Activated CD8-positive, alpha-beta T cell treated with anti-CD3 and anti-CD28 coated beads, Interleukin-2, amount 10 ng/mL, durations not matched to agents 7 days and 5 days (primary cell): ENCODE measurements at regions of chr15 and their contacts with region 1.

Region 1: DNA sequence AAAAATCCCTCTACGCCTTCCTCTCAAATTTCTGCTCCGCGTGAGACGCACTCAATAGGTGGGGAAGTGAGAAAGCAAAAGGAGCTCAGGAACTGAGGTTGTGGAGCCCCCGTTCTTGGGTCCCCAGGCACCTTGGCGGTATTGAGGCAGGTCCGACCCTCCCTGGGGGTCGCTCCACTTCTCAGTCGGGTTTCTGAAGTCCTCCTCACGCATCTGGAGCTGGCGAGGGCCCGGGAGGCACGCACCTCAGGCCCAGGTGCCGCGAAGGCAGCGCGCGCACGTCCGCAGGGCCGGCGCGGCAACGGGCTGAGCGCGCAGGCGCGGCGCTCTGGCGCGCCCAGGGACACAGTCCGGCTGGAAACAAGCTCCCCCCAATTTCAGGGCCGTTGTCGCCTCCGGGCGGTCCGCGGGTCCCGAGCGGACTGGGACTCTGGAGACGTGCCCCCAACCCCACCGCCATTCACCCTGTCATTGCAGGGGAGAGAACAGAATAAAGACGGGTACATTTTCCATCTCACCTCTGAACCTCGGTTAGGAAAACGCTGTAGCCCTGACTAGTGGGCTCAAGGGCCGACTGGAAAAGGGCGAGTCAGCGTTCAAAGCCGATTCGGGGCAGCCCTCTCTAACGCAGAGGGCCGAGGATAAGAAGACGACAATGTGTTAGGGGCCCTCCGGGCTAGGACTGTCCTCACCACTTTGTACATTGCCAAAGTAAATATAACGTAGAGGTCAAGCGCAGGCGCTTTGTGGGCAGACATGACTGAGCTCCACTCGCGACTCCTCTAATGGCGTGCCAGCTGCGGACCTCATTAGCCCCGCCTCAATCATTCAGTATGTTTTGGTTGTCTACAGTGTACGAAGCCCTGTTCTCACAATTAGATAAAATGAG is at the start of gene ZNF770:
- DNase-seq: peak; percentile 84
- ATAC-seq: peak; percentile 93
- H3K4me3 Mint-ChIP-seq: peak within 1 kb of the TSS; percentile 95
- H3K27ac Mint-ChIP-seq: peak within 1 kb of the TSS; percentile 98
- H3K4me1 Mint-ChIP-seq: peaks cover 39% of the 10 kb centered on the region
- H3K27me3 Mint-ChIP-seq: no peaks in the 10 kb centered on the region
- total RNA-seq, gene ZNF770: 34.0 to 35.1 TPM

Region 2: DNA sequence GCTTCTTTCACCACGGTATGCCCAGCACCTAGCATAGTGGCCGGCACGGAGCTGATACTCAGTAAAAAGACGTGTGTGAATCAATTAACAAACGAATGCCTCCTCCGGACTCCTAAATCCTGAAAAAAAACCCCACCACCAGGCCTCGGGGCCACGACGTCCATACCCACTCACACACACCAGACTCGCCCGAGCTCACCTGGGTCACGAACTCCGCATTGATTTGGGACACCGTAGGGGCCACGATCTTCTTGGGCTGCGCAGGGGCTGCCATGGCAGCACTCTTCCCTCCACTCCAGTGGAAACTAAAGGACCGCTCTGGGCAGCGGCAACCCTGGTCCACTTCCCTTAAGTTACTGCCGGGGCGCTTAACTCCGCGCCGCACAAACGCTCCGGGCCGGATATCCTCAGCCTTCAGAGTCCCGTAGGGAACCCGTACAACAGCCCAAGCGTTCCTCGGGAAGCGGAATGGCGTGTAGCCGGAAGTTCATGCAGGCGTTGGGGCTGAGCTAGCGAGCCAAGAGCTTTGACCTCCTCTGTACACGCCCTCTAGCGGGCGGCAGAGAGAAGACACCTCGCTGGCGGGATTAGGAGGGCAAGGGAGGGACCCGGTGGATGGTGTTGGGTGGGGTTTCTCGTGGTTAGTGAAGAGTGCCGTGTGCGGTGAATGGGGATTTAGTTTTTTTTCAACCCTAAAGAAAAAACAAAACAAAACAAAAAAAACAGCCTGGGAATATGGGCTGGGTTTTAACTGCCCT is 18.7 kb before region 1 on chr15 and contains the start of gene AQR:
- CTCF ChIA-PET with region 1: interaction called, 31 read pairs
- POLR2A ChIA-PET with region 1: interaction called, 65 read pairs
- DNase-seq: peak; percentile 95
- ATAC-seq: peak; percentile 97
- H3K4me3 Mint-ChIP-seq: peak within 1 kb of the TSS; percentile 99
- H3K27ac Mint-ChIP-seq: peak within 1 kb of the TSS; percentile 92
- H3K4me1 Mint-ChIP-seq: peaks cover 34% of the 10 kb centered on the region
- H3K27me3 Mint-ChIP-seq: no peaks in the 10 kb centered on the region
- total RNA-seq, gene AQR: 33.2 to 37.0 TPM

Region 3: DNA sequence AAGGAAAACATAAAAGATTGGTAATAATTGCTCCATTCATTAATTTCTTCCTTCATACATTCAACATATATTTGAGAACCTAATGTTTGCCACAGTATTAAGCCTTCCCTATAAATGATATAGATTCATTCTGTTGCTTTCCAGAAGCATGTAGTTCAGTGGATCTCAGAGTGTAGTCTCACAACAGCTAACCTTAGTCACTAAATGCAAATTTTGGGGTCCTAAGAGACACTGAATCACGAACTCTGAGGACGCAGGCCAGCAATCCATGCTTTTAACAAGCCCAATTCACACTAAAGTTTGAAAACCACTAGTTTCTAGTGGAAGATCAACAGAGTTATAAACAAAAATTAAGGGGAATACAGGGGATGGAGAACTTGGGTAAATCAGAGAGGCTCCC is 11.5 kb before region 1 on chr15:
- CTCF ChIA-PET with region 1: interaction called, 8 read pairs
- POLR2A ChIA-PET with region 1: interaction called, 27 read pairs
- DNase-seq: no peak
- ATAC-seq: no peak
- H3K4me3 Mint-ChIP-seq: no peak overlapping the region
- H3K27ac Mint-ChIP-seq: no peak overlapping the region
- H3K4me1 Mint-ChIP-seq: peaks cover 11% of the 10 kb centered on the region
- H3K27me3 Mint-ChIP-seq: no peaks in the 10 kb centered on the region

Region 4: GRCh38 chr15:35038660-35039451 is 50.6 kb after region 1 on chr15:
- CTCF ChIA-PET with region 1: no interaction called
- POLR2A ChIA-PET with region 1: no interaction called
- DNase-seq: no peak
- ATAC-seq: no peak
- H3K4me3 Mint-ChIP-seq: no peak overlapping the region
- H3K27ac Mint-ChIP-seq: no peak overlapping the region
- H3K4me1 Mint-ChIP-seq: no peaks in the 10 kb centered on the region
- H3K27me3 Mint-ChIP-seq: no peaks in the 10 kb centered on the region